Calu3 (cell line): ENCODE measurements at regions of chr2 and their contacts with region 1.

Region 1: GRCh38 chr2:46306330-46306751 is 9.1 kb downstream of the EPAS1 start:
- DNase-seq: peak; percentile 30
- H3K4me3 Mint-ChIP-seq: no peak overlapping the region
- H3K27ac Mint-ChIP-seq: peak overlapping the region; percentile 3
- H3K4me1 Mint-ChIP-seq: peaks cover 77% of the 10 kb centered on the region
- H3K27me3 Mint-ChIP-seq: no peaks in the 10 kb centered on the region
- CTCF ChIP-seq: no peak

Region 2: GRCh38 chr2:46179037-46179652 is 127.2 kb before region 1 on chr2:
- CTCF ChIA-PET with region 1: no interaction called
- intact Hi-C with region 1: no loop called
- DNase-seq: no peak
- H3K4me3 Mint-ChIP-seq: no peak overlapping the region
- H3K27ac Mint-ChIP-seq: no peak overlapping the region
- H3K4me1 Mint-ChIP-seq: no peaks in the 10 kb centered on the region
- H3K27me3 Mint-ChIP-seq: no peaks in the 10 kb centered on the region
- CTCF ChIP-seq: no peak

Region 3: DNA sequence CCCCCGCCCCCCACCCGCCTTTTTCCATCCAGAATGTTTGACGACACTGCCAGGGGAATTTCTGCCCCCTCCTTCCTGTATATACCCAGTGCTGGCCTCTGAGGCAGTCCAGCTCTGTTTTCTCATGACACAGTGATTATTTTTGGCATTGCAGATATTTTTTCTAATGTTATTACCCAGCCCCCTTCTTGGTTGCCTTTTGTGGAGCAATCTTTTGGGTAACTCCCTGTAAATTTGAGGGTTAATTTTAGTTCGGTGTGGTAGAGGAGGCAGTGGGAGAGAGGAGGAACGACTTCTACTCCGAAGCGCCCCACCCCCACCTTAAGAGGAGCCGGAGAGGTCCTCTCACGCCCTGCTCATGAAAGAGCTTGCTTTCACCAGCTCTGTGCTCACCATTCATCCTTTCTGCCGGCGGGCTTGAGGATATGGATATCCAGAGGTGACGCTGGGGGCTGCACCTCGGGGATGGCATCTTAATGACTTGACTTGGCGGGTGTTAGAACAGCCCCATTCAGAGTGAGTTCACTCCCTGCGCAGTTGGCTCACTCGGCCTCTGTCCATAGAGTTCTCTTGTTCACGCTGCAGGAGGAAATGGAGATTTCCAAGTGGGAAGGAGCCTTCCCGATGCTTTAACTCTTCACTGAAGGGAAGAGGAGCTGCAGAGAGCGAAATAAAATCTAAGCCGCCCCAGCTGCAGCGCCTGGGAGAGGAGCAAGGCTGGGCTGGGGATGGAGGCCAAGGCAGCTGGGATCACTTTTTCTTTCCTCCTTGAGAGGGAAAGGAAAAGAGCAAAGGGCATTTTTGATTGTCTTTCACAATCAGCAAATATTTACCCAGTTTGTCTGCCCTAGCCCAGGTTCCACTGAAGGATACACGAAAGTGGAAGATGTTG is 29.3 kb after region 1 on chr2:
- CTCF ChIA-PET with region 1: interaction called, 3 read pairs
- intact Hi-C with region 1: loop called (anchors 2 kb)
- DNase-seq: peak; percentile 17
- H3K4me3 Mint-ChIP-seq: peak overlapping the region; percentile 6
- H3K27ac Mint-ChIP-seq: peak overlapping the region; percentile 7
- H3K4me1 Mint-ChIP-seq: peaks cover 49% of the 10 kb centered on the region
- H3K27me3 Mint-ChIP-seq: peaks cover 12% of the 10 kb centered on the region
- CTCF ChIP-seq: no peak

Region 4: GRCh38 chr2:46416739-46417403 is 110.5 kb after region 1 on chr2:
- CTCF ChIA-PET with region 1: no interaction called
- intact Hi-C with region 1: no loop called
- DNase-seq: no peak
- H3K4me3 Mint-ChIP-seq: no peak overlapping the region
- H3K27ac Mint-ChIP-seq: no peak overlapping the region
- H3K4me1 Mint-ChIP-seq: peaks cover 12% of the 10 kb centered on the region
- H3K27me3 Mint-ChIP-seq: no peaks in the 10 kb centered on the region
- CTCF ChIP-seq: no peak

Region 5: GRCh38 chr2:46547223-46548102 is 241.1 kb after region 1 on chr2:
- CTCF ChIA-PET with region 1: no interaction called
- intact Hi-C with region 1: no loop called
- DNase-seq: no peak
- H3K4me3 Mint-ChIP-seq: no peak overlapping the region
- H3K27ac Mint-ChIP-seq: no peak overlapping the region
- H3K4me1 Mint-ChIP-seq: peaks cover 10% of the 10 kb centered on the region
- H3K27me3 Mint-ChIP-seq: no peaks in the 10 kb centered on the region
- CTCF ChIP-seq: no peak

Region 6: GRCh38 chr2:46909771-46910419 is 603.6 kb after region 1 on chr2:
- CTCF ChIA-PET with region 1: no interaction called
- intact Hi-C with region 1: no loop called
- DNase-seq: peak; percentile 64
- H3K4me3 Mint-ChIP-seq: peak overlapping the region; percentile 24
- H3K27ac Mint-ChIP-seq: peak overlapping the region; percentile 61
- H3K4me1 Mint-ChIP-seq: peaks cover 44% of the 10 kb centered on the region
- H3K27me3 Mint-ChIP-seq: no peaks in the 10 kb centered on the region
- CTCF ChIP-seq: no peak